ENCODE measurements at regions of chr1 and their contacts with region 1.

Region 1: GRCh38 chr1:30911046-30911954 is 2.7 kb upstream of the SDC3 start:
- DNase-seq: peak; percentile 76
- H3K4me3 ChIP-seq: no peak overlapping the region
- CTCF ChIP-seq: peak; percentile 89

Region 2: DNA sequence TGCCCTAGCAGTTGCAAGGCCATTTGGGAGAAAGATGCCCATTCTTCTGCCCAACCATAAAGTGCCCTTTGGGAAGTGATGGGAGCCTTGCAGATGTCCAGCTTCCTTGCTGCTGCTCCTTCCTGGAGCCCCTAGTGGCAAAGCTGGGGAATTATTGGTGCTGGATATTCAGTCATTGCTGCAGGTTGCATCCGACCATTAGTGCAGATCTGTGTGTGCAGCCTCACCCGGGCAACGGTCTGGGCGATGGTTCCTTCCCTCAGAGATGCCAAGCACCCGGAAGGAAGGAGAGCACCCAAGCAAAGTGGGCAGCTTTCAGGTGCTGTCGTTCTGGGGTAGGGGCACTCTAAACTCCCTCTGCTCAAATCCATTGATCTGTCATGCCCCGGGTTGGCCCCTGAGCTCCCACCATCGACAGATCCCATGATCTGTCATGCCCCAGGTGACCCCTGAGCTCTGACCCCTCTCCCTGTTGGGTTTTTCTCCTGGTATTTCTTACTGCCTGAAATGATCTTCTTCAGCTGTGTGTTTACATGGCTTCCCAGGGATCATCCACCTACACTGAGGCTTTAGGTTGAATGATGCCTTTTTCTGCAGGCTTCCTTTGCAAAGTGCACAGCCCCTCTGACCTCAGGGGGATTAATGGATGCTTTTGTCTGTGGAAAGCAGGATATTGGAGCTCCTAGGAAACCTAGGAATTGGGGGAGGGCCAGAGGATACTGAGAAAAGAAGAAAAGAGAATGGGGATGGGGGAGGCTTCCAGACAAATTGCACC is 1207.5 kb before region 1 on chr1:
- in situ Hi-C with region 1: loop called (anchors 25 kb)
- DNase-seq: no peak
- H3K4me3 ChIP-seq: no peak overlapping the region
- CTCF ChIP-seq: peak; percentile 94

Region 3: DNA sequence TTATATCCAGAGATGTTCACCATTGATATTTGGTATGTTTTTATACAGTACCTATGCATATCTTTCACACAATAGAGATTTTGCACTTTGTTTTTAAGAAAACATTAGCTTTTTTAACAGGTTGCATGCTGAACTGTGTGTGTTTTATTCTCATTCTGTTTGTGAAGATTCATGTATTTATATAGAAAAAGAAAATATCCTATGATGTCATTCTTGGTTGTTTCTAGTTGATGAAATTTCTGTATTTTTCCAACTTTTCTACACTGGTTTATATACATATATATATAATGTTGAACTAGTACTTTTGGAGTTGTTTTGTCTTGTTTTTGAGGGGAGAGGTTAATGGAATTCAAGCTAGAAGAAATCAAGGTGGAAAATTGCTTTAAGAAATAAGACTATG is 331.7 kb before region 1 on chr1:
- in situ Hi-C with region 1: no loop called
- DNase-seq: no peak
- H3K4me3 ChIP-seq: no peak overlapping the region
- CTCF ChIP-seq: no peak

Region 4: DNA sequence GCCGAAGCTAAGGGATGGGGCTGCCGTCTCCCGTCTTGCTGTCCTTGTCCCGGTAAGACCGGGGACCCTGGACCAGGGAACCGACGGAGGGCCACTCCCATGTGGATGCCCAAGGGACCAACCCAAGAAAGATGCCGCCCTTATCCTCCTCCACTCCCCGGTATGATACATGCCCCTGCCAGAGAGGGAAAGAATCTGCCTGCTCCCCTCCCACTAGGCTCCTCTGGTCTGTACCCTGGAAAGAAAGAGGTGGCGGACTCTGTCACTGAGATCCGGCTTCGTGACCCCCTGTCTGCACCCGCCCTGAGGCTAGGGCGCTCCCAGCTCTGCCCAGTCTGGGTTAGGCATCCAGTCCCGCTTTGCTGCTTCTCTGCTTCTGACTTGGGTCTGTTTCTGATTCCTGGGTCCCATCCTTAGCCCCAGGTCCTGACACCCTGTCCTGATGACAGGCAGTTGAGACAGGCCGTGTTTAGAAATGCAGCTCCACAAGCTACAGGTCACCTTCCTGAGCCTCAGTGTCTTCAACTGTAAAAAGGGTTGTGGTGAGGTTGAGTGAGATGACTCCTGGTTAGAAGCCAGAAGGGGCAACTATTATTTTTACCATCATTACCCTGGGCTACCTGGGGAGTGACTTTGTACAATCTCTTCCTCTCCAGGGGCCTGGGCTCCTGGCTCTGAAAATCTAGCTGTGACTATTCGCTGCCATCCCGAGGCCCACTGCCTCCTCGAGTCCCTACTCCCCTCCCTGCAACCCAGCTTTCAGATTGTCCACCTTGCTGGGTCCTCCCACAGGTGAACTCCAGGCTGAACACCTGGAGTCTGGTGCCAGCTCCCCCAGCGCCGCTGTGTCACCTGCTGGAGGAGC is 191.7 kb before region 1 on chr1:
- in situ Hi-C with region 1: loop called (anchors 5 kb)
- DNase-seq: no peak
- H3K4me3 ChIP-seq: peak overlapping the region; percentile 45
- CTCF ChIP-seq: no peak

Region 5: DNA sequence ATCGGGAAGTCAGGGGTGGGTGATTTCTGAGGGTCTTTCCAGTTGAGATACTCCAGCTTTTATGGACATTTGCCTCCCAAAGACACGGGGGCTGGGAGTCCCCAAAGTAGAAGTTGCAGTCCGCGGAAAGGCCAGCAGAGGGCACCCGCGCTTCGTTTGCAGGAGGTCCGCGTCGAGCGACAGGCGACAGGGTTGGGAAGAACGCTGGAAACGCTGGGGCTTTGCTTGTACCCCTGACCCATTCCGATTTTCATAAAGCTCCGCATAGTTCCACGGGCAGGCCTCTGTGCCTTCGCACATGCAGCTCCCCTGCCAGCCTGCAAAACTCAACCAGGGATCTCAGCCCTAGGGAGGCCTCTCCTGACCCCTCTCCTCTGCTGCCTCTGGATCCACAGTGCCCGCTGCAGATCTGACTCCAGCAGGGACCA is 109.5 kb before region 1 on chr1:
- in situ Hi-C with region 1: loop called (anchors 5 kb)
- DNase-seq: no peak
- H3K4me3 ChIP-seq: no peak overlapping the region
- CTCF ChIP-seq: peak; percentile 96

Region 6: GRCh38 chr1:30868833-30869435 is 42.4 kb before region 1 on chr1:
- in situ Hi-C with region 1: loop called (anchors 5 kb)
- DNase-seq: no peak
- H3K4me3 ChIP-seq: no peak overlapping the region
- CTCF ChIP-seq: no peak

Region 7: GRCh38 chr1:31010086-31010989 is 99.0 kb after region 1 on chr1:
- in situ Hi-C with region 1: loop called (anchors 25 kb)
- DNase-seq: no peak
- H3K4me3 ChIP-seq: no peak overlapping the region
- CTCF ChIP-seq: no peak